ENCODE measurements at regions of chr16 and their contacts with region 1.

Region 1: DNA sequence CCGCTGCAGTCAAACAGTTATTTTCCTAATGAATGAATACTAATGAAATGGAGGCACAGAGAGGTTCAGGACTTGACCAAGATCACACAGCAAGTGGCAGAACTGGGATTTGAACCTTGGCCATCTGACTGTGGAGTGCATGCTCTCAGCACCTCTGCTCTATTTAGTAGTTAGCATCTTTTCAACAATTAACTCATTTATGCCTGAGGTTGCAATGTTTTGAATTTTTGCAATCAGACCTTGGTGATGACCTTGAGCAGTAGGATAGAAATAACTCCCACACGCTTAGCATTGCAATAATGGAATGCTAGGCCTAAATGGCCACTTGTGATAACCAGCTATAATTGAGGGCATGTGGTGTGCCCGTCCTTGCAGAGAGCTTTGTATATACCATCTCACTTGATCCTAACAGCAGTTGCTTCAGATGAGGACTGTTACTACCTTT is 31.0 kb downstream of the NAGPA start:
- DNase-seq: no peak
- ATAC-seq: peak; percentile 80

Region 2: DNA sequence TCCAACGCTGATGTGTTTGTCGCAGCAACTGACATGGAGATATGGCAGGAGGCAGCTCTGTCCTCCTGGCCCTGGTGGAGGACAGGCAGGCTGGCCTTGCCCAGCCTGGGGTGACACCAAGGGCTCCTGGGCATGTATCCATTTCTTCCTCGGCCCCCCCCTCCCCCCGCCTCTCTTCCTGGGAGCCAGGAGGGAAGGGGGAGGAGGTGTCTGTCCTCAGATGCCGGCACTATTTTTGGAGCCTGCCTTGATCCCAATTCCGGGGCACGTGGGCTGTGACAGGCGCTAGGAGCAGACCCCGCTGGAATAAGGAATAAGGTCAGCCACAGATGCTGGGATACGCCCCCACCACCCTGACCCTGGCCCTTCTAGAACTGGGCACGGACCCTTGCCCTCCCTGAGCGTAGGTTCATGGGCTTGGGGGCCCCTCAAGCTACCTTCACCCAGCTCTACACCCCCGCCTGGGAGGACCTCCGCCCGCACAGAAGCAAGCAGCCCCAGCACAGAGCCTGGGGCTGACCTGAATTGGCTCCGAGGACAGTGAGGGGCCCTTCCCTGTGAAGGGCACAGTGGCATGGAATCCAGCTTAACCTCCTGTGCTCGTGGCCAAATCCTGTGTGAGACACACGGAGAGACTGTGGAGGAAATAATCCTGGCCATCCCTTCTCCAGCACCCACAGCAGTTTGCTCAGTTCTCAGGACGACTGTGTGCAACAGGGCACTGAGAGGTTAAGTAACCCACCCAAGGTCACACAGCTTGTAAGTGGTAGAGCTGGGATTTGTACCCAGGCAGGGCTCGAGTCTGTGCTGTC is 20.5 kb before region 1 on chr16:
- intact Hi-C with region 1: loop called (anchors 1 kb)
- DNase-seq: no peak
- ATAC-seq: peak; percentile 97

Measured in Right ventricle myocardium inferior (tissue), 1 donor.